CD4-positive, alpha-beta T cell (primary cell): ENCODE measurements at regions of chr2 and their contacts with region 1.

Region 1: GRCh38 chr2:236569573-236569973 is at the start of gene ACKR3:
- DNase-seq: peak; percentile 44 to 92 (median 65)
- ATAC-seq: peak; percentile 98
- H3K4me3 ChIP-seq: peak within 1 kb of the TSS; percentile 50
- H3K4me3 Mint-ChIP-seq: peak within 1 kb of the TSS; percentile 68
- H3K27ac ChIP-seq: no peak within 1 kb of the TSS
- H3K27ac Mint-ChIP-seq: peak within 1 kb of the TSS; percentile 33
- H3K4me1 ChIP-seq: peaks cover 23% of the 10 kb centered on the region
- H3K4me1 Mint-ChIP-seq: peaks cover 20% of the 10 kb centered on the region
- H3K27me3 ChIP-seq: no peaks in the 10 kb centered on the region
- H3K27me3 Mint-ChIP-seq: no peaks in the 10 kb centered on the region
- CTCF ChIP-seq: peak; percentile 68
- total RNA-seq, gene ACKR3: 0.61 to 0.74 TPM

Region 2: GRCh38 chr2:236352761-236353593 is 216.6 kb before region 1 on chr2:
- CTCF ChIA-PET with region 1: interaction called, 3 read pairs
- POLR2A ChIA-PET with region 1: no interaction called
- intact Hi-C with region 1: loop called (anchors 1 kb)
- DNase-seq: peak in 8 of 14 experiments; percentile 18 to 70 (median 35)
- ATAC-seq: peak; percentile 63
- H3K4me3 ChIP-seq: no peak overlapping the region
- H3K4me3 Mint-ChIP-seq: no peak overlapping the region
- H3K27ac ChIP-seq: no peak overlapping the region
- H3K27ac Mint-ChIP-seq: no peak overlapping the region
- H3K4me1 ChIP-seq: no peaks in the 10 kb centered on the region
- H3K4me1 Mint-ChIP-seq: peaks cover 6% of the 10 kb centered on the region
- H3K27me3 ChIP-seq: peaks cover 5 to 6% of the 10 kb centered on the region in 2 experiments
- H3K27me3 Mint-ChIP-seq: peaks cover 13% of the 10 kb centered on the region
- CTCF ChIP-seq: peak; percentile 97

Region 3: GRCh38 chr2:236536727-236537398 is 32.7 kb before region 1 on chr2:
- CTCF ChIA-PET with region 1: interaction called, 4 read pairs
- POLR2A ChIA-PET with region 1: interaction called, 19 read pairs
- intact Hi-C with region 1: no loop called
- DNase-seq: peak; percentile 38 to 85 (median 57)
- ATAC-seq: peak; percentile 96
- H3K4me3 ChIP-seq: peak overlapping the region; percentile 81
- H3K4me3 Mint-ChIP-seq: peak overlapping the region; percentile 96
- H3K27ac ChIP-seq: peak overlapping the region; percentile 58 to 62
- H3K27ac Mint-ChIP-seq: peak overlapping the region; percentile 93
- H3K4me1 ChIP-seq: peaks cover 36% of the 10 kb centered on the region
- H3K4me1 Mint-ChIP-seq: peaks cover 52% of the 10 kb centered on the region
- H3K27me3 ChIP-seq: no peaks in the 10 kb centered on the region
- H3K27me3 Mint-ChIP-seq: no peaks in the 10 kb centered on the region
- CTCF ChIP-seq: no peak

Region 4: GRCh38 chr2:236554627-236555282 is 14.8 kb before region 1 on chr2:
- CTCF ChIA-PET with region 1: interaction called, 4 read pairs
- POLR2A ChIA-PET with region 1: interaction called, 13 read pairs
- intact Hi-C with region 1: no loop called
- DNase-seq: peak in 9 of 14 experiments; percentile 15 to 55 (median 31)
- ATAC-seq: peak; percentile 82
- H3K4me3 ChIP-seq: no peak overlapping the region
- H3K4me3 Mint-ChIP-seq: no peak overlapping the region
- H3K27ac ChIP-seq: no peak overlapping the region
- H3K27ac Mint-ChIP-seq: peak overlapping the region; percentile 50
- H3K4me1 ChIP-seq: peaks cover 65% of the 10 kb centered on the region
- H3K4me1 Mint-ChIP-seq: peaks cover 87% of the 10 kb centered on the region
- H3K27me3 ChIP-seq: no peaks in the 10 kb centered on the region
- H3K27me3 Mint-ChIP-seq: no peaks in the 10 kb centered on the region
- CTCF ChIP-seq: no peak

Region 5: GRCh38 chr2:237060534-237061312 is 491.1 kb after region 1 on chr2:
- CTCF ChIA-PET with region 1: no interaction called
- POLR2A ChIA-PET with region 1: no interaction called
- intact Hi-C with region 1: loop called in 1 of 2 experiments (anchors 5 kb)
- DNase-seq: peak in 7 of 14 experiments; percentile 6 to 62 (median 23)
- ATAC-seq: peak; percentile 48
- H3K4me3 ChIP-seq: no peak overlapping the region
- H3K4me3 Mint-ChIP-seq: no peak overlapping the region
- H3K27ac ChIP-seq: no peak overlapping the region
- H3K27ac Mint-ChIP-seq: no peak overlapping the region
- H3K4me1 ChIP-seq: peaks cover 5% of the 10 kb centered on the region
- H3K4me1 Mint-ChIP-seq: no peaks in the 10 kb centered on the region
- H3K27me3 ChIP-seq: no peaks in the 10 kb centered on the region
- H3K27me3 Mint-ChIP-seq: peaks cover 5% of the 10 kb centered on the region
- CTCF ChIP-seq: peak; percentile 51